ENCODE measurements at regions of chr7 and their contacts with region 1.

Region 1: DNA sequence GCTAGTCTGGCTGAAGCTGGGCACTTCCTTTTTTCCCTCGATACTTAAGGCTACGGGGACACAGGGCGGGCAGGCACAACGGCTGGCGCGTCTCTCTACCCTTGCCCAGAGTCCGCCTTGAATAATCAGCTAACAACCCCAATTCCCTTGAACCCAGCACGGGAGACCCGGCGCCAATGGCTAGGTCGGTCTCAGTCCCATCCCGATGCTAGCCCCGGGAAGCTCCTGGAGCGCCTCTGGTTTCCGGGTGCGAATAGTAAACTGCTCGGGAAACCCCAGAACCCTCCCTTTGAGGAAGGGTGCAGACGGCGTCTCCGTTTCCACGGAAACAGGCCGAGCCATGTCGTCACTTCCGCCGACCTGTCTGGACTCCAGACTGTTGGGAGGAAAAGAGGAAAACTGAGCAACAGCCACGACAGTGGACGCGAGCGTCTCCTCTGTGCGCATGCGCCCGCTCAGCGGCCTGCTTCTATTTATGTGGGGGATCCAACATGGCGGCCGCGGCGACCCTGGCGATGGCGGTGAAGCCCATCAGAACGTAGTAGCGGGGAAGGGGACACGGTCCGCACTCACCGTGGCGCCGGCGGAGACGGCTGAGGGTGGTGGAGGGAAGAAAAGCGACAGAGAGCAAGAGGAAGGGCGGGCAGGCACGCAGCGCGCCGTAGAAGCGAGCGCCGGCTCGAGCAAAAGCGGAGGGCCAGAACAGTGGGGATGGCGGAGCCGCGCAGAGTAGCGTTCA is at the start of gene UBN2:
- DNase-seq: peak; percentile 98 to 100 (median 99)
- ATAC-seq: peak; percentile 92
- H3K4me3 ChIP-seq: peak within 1 kb of the TSS; percentile 92
- H3K27ac ChIP-seq: peak within 1 kb of the TSS; percentile 91
- H3K4me1 ChIP-seq: peaks cover 15 to 20% of the 10 kb centered on the region in 2 experiments
- H3K27me3 ChIP-seq: no peaks in the 10 kb centered on the region
- CTCF ChIP-seq: 0 out of 6 replicates have a peak, but pooled peaks of 1 of the 3 experiments have one; percentile 1
- EP300 ChIP-seq: peak; percentile 25
- POLR2A ChIP-seq: peak; percentile 98
- RAD21 ChIP-seq: no peak; a peak in 1 of 4 replicates
- polyA plus RNA-seq, gene UBN2: 1.2 to 1.5 TPM

Region 2: GRCh38 chr7:139075031-139075652 is 155.8 kb before region 1 on chr7:
- CTCF ChIA-PET with region 1: no interaction called
- POLR2A ChIA-PET with region 1: no interaction called
- in situ Hi-C with region 1: no loop called
- intact Hi-C with region 1: no loop called
- DNase-seq: peak; percentile 76 to 87 (median 79)
- ATAC-seq: peak; percentile 96
- H3K4me3 ChIP-seq: no peak overlapping the region
- H3K27ac ChIP-seq: no peak overlapping the region; the same call in 2 of the 3 replicates
- H3K4me1 ChIP-seq: peaks cover 0 to 3% of the 10 kb centered on the region in 2 experiments; a peak in 2 of 5 replicates
- H3K27me3 ChIP-seq: no peaks in the 10 kb centered on the region
- CTCF ChIP-seq: peak; percentile 84 to 98 (median 94)
- EP300 ChIP-seq: peak; percentile 24; the same call in 1 of the 2 replicates
- POLR2A ChIP-seq: no peak
- RAD21 ChIP-seq: peak; percentile 81 to 83

Region 3: GRCh38 chr7:139095194-139095659 is 135.7 kb before region 1 on chr7:
- CTCF ChIA-PET with region 1: interaction called, 3 read pairs
- POLR2A ChIA-PET with region 1: no interaction called
- in situ Hi-C with region 1: no loop called
- intact Hi-C with region 1: loop called (anchors 5 kb)
- DNase-seq: peak in 3 of 4 experiments; percentile 16 to 74 (median 64)
- ATAC-seq: peak; percentile 53
- H3K4me3 ChIP-seq: no peak overlapping the region
- H3K27ac ChIP-seq: peak overlapping the region; percentile 30; the same call in 2 of the 3 replicates
- H3K4me1 ChIP-seq: peaks cover 30 to 41% of the 10 kb centered on the region in 2 experiments
- H3K27me3 ChIP-seq: no peaks in the 10 kb centered on the region
- CTCF ChIP-seq: peak in 1 of 3 experiments; percentile 13; a peak in 1 of 6 replicates
- EP300 ChIP-seq: peak; percentile 12; the same call in 1 of the 2 replicates
- POLR2A ChIP-seq: no peak
- RAD21 ChIP-seq: peak in 1 of 2 experiments; percentile 7; a peak in 1 of 4 replicates

Region 4: GRCh38 chr7:139109188-139109982 is 121.6 kb before region 1 on chr7 and contains the start of gene ZC3HAV1:
- CTCF ChIA-PET with region 1: no interaction called
- POLR2A ChIA-PET with region 1: interaction called, 3 read pairs
- in situ Hi-C with region 1: no loop called
- intact Hi-C with region 1: loop called (anchors 5 kb)
- DNase-seq: peak; percentile 85 to 94 (median 90)
- ATAC-seq: peak; percentile 91
- H3K4me3 ChIP-seq: peak within 1 kb of the TSS; percentile 87
- H3K27ac ChIP-seq: peak within 1 kb of the TSS; percentile 88
- H3K4me1 ChIP-seq: peaks cover 19 to 44% of the 10 kb centered on the region in 2 experiments
- H3K27me3 ChIP-seq: no peaks in the 10 kb centered on the region
- CTCF ChIP-seq: peak in 1 of 3 experiments; percentile 38; a peak in 5 of 6 replicates
- EP300 ChIP-seq: no peak
- POLR2A ChIP-seq: peak; percentile 93
- RAD21 ChIP-seq: peak in 1 of 2 experiments; percentile 18; a peak in 3 of 4 replicates
- polyA plus RNA-seq, gene ZC3HAV1: 11.9 to 13.4 TPM

Region 5: DNA sequence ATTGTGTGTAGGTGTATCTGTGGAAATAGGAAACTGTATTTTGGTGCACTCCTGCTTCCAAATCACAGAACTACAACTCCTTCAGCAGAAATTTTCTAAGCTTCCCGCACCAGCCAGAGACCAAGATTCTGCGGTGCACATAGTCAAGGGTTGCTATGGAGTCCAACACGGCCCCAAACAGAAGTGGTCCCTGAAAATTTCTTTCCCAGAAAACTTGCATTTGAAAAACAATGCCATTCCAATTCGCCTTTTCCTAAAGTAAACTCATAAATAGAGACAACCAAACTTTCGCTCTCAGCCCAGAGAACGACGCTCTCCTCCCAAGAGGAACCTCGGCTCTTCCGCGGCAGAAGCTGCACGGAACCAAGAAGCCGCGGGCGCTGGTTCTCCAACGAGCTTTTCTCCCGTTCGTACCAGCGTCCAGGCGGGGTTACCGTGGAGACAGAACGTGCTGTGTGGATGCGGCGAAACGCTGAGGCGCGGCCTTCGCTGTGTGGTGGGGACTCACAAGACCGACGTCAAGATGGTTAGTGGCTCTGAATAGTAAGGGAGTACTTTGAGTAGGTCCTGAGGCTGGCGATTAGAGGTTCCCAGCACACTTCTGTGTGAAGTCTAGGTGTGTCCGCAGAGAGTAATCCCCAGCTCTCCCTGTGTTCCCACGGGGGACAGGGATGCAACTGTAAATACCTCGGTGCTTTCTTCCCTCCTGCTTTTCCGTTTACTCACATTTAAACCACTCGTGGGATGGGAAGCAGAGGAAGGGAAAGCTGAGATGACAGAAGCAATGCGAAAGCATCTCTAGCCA is 97.4 kb before region 1 on chr7:
- CTCF ChIA-PET with region 1: no interaction called
- POLR2A ChIA-PET with region 1: interaction called, 4 read pairs
- in situ Hi-C with region 1: no loop called
- intact Hi-C with region 1: loop called (anchors 2 kb)
- DNase-seq: peak; percentile 75 to 97 (median 84)
- ATAC-seq: peak; percentile 99
- H3K4me3 ChIP-seq: peak overlapping the region; percentile 40
- H3K27ac ChIP-seq: peak overlapping the region; percentile 9; the same call in 2 of the 3 replicates
- H3K4me1 ChIP-seq: no peaks in the 10 kb centered on the region; a peak in 1 of 5 replicates
- H3K27me3 ChIP-seq: no peaks in the 10 kb centered on the region
- CTCF ChIP-seq: 0 out of 6 replicates have a peak, but pooled peaks of 1 of the 3 experiments have one; percentile 9
- EP300 ChIP-seq: peak; percentile 58
- POLR2A ChIP-seq: peak; percentile 82
- RAD21 ChIP-seq: peak; percentile 46 to 54; a peak in 3 of 4 replicates

Region 6: GRCh38 chr7:139242741-139243281 is 11.9 kb after region 1 on chr7:
- CTCF ChIA-PET with region 1: no interaction called
- POLR2A ChIA-PET with region 1: interaction called, 53 read pairs
- in situ Hi-C with region 1: no loop called
- intact Hi-C with region 1: no loop called
- DNase-seq: peak in 3 of 4 experiments; percentile 27 to 54 (median 54)
- ATAC-seq: peak; percentile 85
- H3K4me3 ChIP-seq: no peak overlapping the region
- H3K27ac ChIP-seq: peak overlapping the region; percentile 42; the same call in 2 of the 3 replicates
- H3K4me1 ChIP-seq: peaks cover 0 to 14% of the 10 kb centered on the region in 2 experiments; a peak in 3 of 5 replicates
- H3K27me3 ChIP-seq: no peaks in the 10 kb centered on the region
- CTCF ChIP-seq: no peak
- EP300 ChIP-seq: peak; percentile 30; the same call in 1 of the 2 replicates
- POLR2A ChIP-seq: no peak
- RAD21 ChIP-seq: no peak

Region 7: DNA sequence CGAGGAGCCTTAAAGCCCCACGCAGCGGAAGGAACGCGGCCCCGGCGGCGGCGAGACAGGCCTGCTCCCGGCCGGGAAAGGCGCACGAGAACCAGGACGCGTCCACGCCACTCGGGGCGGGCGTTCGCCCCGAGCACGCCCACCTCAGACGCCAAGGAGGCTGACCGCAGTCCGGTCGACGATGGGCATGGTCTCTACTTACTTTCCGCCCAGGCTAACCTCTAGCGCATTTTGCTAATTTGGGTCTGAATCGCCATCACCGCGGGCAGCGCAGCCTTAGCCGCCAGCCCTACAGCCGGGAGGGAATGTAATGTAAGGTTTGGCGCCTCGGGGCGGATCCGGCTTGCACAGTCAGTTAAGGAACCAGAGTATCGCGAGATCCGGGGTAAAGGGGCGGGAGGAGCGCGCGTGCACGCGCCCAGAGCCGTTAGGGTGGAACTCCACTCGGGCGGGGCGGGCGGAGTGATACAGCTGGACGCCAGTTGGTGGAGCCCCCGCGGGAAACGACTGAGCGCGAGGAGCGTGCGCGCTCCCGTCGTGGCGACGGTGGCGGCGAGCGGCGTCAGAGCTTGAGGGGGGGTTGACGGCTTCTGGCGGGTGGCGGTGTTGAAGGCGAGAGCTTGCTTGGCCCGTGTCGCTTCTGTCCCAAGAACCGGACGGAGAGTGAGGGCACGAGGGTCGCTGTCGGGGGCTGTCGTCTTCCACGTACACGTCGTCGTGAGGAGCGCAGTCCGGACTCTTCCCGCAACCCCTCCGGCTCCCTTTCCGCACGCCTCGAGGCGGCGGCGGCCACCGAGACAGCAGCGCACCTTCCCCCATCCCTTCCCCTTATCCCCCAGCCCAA is 128.6 kb after region 1 on chr7 and contains the start of gene LUC7L2:
- CTCF ChIA-PET with region 1: no interaction called
- POLR2A ChIA-PET with region 1: no interaction called
- in situ Hi-C with region 1: no loop called
- intact Hi-C with region 1: loop called (anchors 1 kb)
- DNase-seq: peak; percentile 97 to 100 (median 98)
- ATAC-seq: peak; percentile 81
- H3K4me3 ChIP-seq: peak within 1 kb of the TSS; percentile 65
- H3K27ac ChIP-seq: peak within 1 kb of the TSS; percentile 98
- H3K4me1 ChIP-seq: peaks cover 10 to 22% of the 10 kb centered on the region in 2 experiments
- H3K27me3 ChIP-seq: no peaks in the 10 kb centered on the region
- CTCF ChIP-seq: peak in 2 of 3 experiments; percentile 38 to 65; a peak in 2 of 6 replicates
- EP300 ChIP-seq: peak; percentile 68
- POLR2A ChIP-seq: peak; percentile 100
- RAD21 ChIP-seq: no peak
- polyA plus RNA-seq, gene LUC7L2: 56.1 to 66.5 TPM